Mammary epithelial cell (primary cell): ENCODE measurements at regions of chr19 and their contacts with region 1.

Region 1: DNA sequence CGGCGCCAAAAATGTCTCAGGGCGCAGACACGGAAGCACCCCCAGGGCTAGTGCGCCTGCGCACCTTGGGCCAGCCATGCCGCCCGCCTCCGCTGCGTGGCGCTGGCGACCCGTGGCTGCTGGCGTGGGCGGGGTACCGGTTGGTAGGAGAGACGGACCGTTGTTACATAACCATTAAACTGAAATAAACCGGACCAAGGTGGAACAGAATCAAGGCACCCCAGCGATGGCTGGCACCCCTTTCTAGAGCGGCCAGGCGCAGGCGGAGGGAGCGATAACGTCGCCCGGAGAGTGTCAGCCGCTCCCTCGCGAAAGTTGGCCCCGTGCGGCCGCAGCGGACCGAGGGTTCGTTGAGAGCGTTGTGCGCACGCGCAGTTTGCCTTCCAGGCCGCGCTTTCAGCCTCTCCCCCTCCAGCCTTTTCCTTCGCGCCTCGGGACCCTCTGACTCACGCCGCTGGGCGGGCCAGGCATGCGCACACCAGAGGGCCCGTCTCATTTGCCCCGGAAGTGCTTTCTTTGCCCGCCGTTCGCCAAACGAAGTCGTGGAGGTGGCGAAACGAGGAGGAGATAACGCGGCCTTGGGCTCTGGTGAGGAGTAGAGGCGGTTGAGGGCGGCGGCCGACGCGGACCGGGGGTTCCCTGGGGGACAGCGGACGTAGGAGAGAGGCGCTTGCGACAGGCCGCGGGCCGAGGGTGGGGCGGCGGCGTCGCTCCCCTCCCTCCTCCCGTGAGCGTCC is at the starts of genes PLEKHJ1 and SF3A2:
- DNase-seq: peak; percentile 97
- H3K4me3 ChIP-seq: peak within 1 kb of the TSS; percentile 67 to 90 (median 84)
- H3K27ac ChIP-seq: peak within 1 kb of the TSS; percentile 79
- H3K4me1 ChIP-seq: peaks cover 38% of the 10 kb centered on the region
- H3K27me3 ChIP-seq: no peaks in the 10 kb centered on the region
- CTCF ChIP-seq: peak; percentile 93 to 100
- total RNA-seq, gene PLEKHJ1: 33.0 to 61.5 TPM
- total RNA-seq, gene SF3A2: 21.0 to 68.9 TPM

Region 2: DNA sequence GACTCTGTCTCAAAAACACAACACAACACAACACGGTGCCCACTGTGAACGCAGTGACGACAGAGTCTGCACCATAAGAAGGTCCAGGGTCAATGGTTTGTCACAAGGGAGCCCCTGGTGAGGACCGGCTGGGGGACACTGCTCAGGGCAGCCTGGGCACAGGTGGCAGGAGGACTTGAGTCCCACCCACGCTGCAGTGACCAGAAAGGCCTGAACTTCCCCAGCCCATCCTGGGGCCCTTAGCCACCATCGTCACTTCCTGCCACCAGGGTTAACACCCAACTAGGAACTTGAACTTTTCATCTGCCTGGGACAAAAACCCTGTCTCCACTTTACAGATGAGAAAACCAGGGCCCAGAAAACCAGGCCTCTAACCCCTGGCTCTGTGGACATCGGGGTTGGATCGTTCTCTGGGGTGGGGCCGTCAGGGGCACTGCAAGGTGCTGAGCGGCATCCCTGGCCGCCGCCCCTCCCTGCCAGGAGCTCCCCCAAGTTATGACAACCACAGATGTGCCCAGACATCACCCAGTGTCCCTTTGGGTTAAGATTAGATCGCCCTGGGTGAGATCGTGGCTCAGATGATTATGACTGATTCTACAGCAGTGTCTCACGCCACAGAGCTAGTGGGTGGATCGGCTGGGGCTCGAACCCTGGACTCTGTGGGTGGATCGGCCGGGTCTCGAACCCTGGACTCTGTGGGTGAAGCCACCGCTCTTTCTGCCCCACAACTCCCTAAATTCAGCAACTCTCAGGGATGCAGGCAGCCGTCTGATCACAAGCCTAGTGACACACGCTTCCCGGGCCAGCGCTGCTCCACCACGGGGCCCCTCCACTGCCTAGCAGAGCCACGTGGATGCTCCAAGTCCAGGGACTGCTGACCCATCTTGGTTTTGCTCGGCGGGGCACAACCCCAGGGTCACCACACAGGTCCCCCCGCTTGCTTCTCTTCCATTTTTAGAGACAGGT is 154.3 kb before region 1 on chr19:
- CTCF ChIA-PET with region 1: no interaction called
- dilution Hi-C with region 1: no loop called
- in situ Hi-C with region 1: no loop called
- intact Hi-C with region 1: no loop called
- DNase-seq: no peak
- H3K4me3 ChIP-seq: no peak overlapping the region
- H3K27ac ChIP-seq: no peak overlapping the region
- H3K4me1 ChIP-seq: peaks cover 36% of the 10 kb centered on the region
- H3K27me3 ChIP-seq: no peaks in the 10 kb centered on the region
- CTCF ChIP-seq: no peak

Region 3: GRCh38 chr19:2151339-2152229 is 84.9 kb before region 1 on chr19 and contains the start of gene AP3D1:
- CTCF ChIA-PET with region 1: interaction called, 10 read pairs
- dilution Hi-C with region 1: no loop called
- in situ Hi-C with region 1: no loop called
- intact Hi-C with region 1: loop called (anchors 1 kb)
- DNase-seq: peak; percentile 100
- H3K4me3 ChIP-seq: peak within 1 kb of the TSS; percentile 91 to 100 (median 98)
- H3K27ac ChIP-seq: peak within 1 kb of the TSS; percentile 72
- H3K4me1 ChIP-seq: peaks cover 32% of the 10 kb centered on the region
- H3K27me3 ChIP-seq: no peaks in the 10 kb centered on the region
- CTCF ChIP-seq: no peak
- total RNA-seq, gene AP3D1: 124 to 143 TPM

Region 4: GRCh38 chr19:2269244-2269947 is 32.9 kb after region 1 on chr19:
- CTCF ChIA-PET with region 1: no interaction called
- dilution Hi-C with region 1: loop called (anchors 5 kb)
- in situ Hi-C with region 1: no loop called
- intact Hi-C with region 1: loop called (anchors 1 kb)
- DNase-seq: peak; percentile 94
- H3K4me3 ChIP-seq: peak overlapping the region; percentile 95 to 100 (median 99)
- H3K27ac ChIP-seq: peak overlapping the region; percentile 74
- H3K4me1 ChIP-seq: peaks cover 35% of the 10 kb centered on the region
- H3K27me3 ChIP-seq: no peaks in the 10 kb centered on the region
- CTCF ChIP-seq: no peak

Region 5: GRCh38 chr19:2385053-2385721 is 148.7 kb after region 1 on chr19:
- CTCF ChIA-PET with region 1: no interaction called
- dilution Hi-C with region 1: no loop called
- in situ Hi-C with region 1: no loop called
- intact Hi-C with region 1: loop called (anchors 1 kb)
- DNase-seq: peak; percentile 89
- H3K4me3 ChIP-seq: peak overlapping the region in 1 of 3 experiments; percentile 40
- H3K27ac ChIP-seq: no peak overlapping the region
- H3K4me1 ChIP-seq: peaks cover 7% of the 10 kb centered on the region
- H3K27me3 ChIP-seq: no peaks in the 10 kb centered on the region
- CTCF ChIP-seq: peak in 1 of 2 donors; percentile 27

Region 6: DNA sequence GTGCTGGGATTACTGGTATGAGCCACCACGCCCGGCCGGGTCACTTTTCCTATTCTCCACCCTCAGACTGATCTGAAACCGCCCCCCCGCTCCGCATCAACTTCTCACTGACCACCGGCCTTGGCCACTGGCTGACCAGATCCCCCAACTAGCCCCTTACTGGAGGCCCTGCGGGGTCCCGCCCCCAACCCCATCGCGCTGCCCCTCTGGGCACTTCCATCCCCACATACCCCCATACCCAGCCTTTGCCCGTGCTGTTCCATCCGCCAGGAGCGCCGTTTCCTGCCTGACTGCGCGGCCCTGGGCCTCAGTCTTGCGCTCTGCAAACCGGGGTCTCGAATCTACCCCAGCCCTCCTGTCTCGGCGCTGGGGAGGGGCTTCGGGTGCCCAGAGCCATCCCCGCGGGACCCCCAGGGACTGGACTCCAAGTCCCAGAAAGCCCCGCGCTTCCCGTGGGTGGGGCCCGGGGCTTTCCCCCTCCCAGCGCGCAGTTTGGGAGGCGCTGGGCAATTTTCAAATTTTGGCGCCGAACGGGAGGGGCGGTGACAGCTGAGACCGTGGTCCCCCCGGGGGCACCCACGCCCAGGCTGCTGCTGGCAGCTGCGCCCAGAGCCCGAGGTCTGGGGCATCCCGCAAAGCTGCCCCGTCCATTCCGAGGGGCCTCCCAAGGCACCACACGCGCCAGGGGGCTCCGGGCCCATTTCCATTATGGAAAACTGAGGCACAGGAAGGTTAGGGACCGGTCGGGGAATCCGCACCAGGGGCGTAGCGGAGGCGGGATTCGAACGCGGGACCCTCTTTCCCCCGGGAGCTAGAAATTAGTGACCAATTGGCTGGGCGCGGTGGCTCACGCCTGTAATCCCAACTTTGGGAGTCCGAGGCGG is 225.5 kb after region 1 on chr19:
- CTCF ChIA-PET with region 1: interaction called, 3 read pairs
- dilution Hi-C with region 1: no loop called
- in situ Hi-C with region 1: no loop called
- intact Hi-C with region 1: loop called (anchors 5 kb)
- DNase-seq: peak; percentile 59
- H3K4me3 ChIP-seq: peak overlapping the region; percentile 69 to 78 (median 74)
- H3K27ac ChIP-seq: peak overlapping the region; percentile 60
- H3K4me1 ChIP-seq: peaks cover 15% of the 10 kb centered on the region
- H3K27me3 ChIP-seq: no peaks in the 10 kb centered on the region
- CTCF ChIP-seq: peak in 1 of 2 donors; percentile 39

Region 7: GRCh38 chr19:2610637-2611482 is 374.4 kb after region 1 on chr19:
- CTCF ChIA-PET with region 1: no interaction called
- dilution Hi-C with region 1: no loop called
- in situ Hi-C with region 1: no loop called
- intact Hi-C with region 1: loop called (anchors 2 kb)
- DNase-seq: peak; percentile 72
- H3K4me3 ChIP-seq: peak overlapping the region in 2 of 3 experiments; percentile 35 to 41
- H3K27ac ChIP-seq: no peak overlapping the region
- H3K4me1 ChIP-seq: peaks cover 6% of the 10 kb centered on the region
- H3K27me3 ChIP-seq: no peaks in the 10 kb centered on the region
- CTCF ChIP-seq: peak; percentile 84 to 99